Left ventricle myocardium inferior (tissue), 1 donor: ENCODE measurements at regions of chr6 and their contacts with region 1.

Region 1: GRCh38 chr6:69835414-69836179 is 30.8 kb upstream of the COL19A1 start:
- DNase-seq: no peak
- H3K4me3 ChIP-seq: no peak overlapping the region
- H3K27ac ChIP-seq: no peak overlapping the region
- H3K4me1 ChIP-seq: no peaks in the 10 kb centered on the region
- H3K27me3 ChIP-seq: no peaks in the 10 kb centered on the region
- CTCF ChIP-seq: peak; percentile 85

Region 2: GRCh38 chr6:70107852-70108629 is 272.4 kb after region 1 on chr6:
- intact Hi-C with region 1: loop called (anchors 5 kb)
- DNase-seq: no peak
- H3K4me3 ChIP-seq: no peak overlapping the region
- H3K27ac ChIP-seq: no peak overlapping the region
- H3K4me1 ChIP-seq: no peaks in the 10 kb centered on the region
- H3K27me3 ChIP-seq: no peaks in the 10 kb centered on the region
- CTCF ChIP-seq: peak; percentile 76